Upper lobe of right lung (tissue), 1 donor: ENCODE measurements at regions of chr10 and their contacts with region 1.

Region 1: GRCh38 chr10:72812753-72813430 is 80.6 kb upstream of the OIT3 start:
- DNase-seq: no peak
- ATAC-seq: no peak
- H3K4me3 ChIP-seq: no peak overlapping the region
- H3K27ac ChIP-seq: no peak overlapping the region
- H3K4me1 ChIP-seq: no peaks in the 10 kb centered on the region
- H3K27me3 ChIP-seq: no peaks in the 10 kb centered on the region
- CTCF ChIP-seq: no peak

Region 2: GRCh38 chr10:72702868-72703581 is 109.9 kb before region 1 on chr10:
- intact Hi-C with region 1: loop called (anchors 10 kb)
- DNase-seq: no peak
- ATAC-seq: no peak
- H3K4me3 ChIP-seq: no peak overlapping the region
- H3K27ac ChIP-seq: no peak overlapping the region
- H3K4me1 ChIP-seq: peaks cover under 1% of the 10 kb centered on the region
- H3K27me3 ChIP-seq: no peaks in the 10 kb centered on the region
- CTCF ChIP-seq: no peak